ENCODE measurements at regions of chr16 and their contacts with region 1.

Region 1: GRCh38 chr16:87874639-87875465 is 5.5 kb upstream of the SLC7A5 start:
- DNase-seq: no peak
- ATAC-seq: no peak

Region 2: GRCh38 chr16:87778830-87779579 is 95.8 kb before region 1 on chr16:
- intact Hi-C with region 1: loop called (anchors 1 kb)
- DNase-seq: peak; percentile 96
- ATAC-seq: peak; percentile 94

Region 3: GRCh38 chr16:87853411-87854052 is 21.3 kb before region 1 on chr16:
- intact Hi-C with region 1: loop called (anchors 2 kb)
- DNase-seq: peak; percentile 96
- ATAC-seq: peak; percentile 90

Region 4: DNA sequence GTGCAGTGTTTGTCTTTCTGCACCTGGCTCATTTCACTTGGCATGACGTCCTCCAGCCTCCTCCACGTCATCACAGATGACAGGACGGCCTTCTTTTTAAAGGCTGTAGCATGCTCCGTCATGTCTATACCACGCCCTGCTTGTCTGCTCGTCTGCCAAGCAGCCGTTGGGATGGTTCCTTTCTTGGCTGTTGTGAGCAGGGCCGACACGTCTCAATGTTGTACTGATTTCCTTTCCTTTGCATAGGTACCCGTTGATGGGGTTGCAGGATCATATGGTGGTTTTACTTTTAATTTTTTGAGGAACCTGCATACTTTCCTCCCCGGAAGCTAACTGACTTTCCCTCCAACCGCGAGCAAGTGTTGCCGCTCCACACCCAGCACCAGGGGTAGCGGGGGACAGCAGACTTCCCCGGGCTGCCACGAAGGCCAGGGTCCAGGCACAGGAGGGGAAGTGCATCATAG is 295.7 kb after region 1 on chr16:
- intact Hi-C with region 1: no loop called
- DNase-seq: no peak
- ATAC-seq: no peak

Measured in Right ventricle myocardium inferior (tissue), 1 donor.